Activated CD4-positive, alpha-beta T cell treated with anti-CD3 and anti-CD28 coated beads for 36 hours (primary cell): ENCODE measurements at regions of chr17 and their contacts with region 1.

Region 1: DNA sequence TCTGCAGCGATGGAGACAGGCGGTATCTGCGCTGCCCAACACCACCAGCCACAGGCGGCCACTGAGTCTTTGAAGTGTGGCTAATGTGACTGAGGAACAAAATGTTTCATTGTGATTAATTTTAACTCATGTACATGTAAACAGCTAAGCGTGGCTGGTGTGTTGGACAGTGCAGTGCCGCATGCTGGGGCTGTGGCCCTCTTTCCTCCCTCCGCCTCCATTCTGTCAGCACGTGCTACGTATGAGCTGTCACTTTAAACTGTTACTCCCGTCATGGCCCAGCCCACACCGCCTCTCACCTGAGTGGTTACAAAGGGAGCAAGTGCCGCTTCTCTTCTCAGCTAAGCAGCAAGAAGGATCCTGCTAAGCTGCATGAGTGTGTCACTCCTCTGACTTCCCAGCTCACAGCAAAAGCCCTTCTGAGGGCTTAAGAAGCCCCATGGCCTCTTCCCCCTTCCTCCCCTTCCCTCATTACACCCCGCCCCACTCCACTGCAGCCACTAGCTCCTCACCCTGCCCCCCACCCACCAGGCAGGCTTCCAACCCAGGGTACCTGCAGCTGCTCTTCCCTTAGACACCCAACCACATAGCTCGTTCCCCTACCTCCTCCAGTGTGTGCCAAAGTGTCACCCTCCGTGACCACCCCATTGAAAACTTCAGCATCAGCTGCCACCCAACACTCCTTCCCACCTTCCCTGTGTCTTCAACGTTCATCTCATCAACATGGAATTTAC is 15.0 kb downstream of the HASPIN start:
- DNase-seq: peak; percentile 88
- ATAC-seq: peak; percentile 89
- H3K4me3 Mint-ChIP-seq: no peak overlapping the region
- H3K27ac Mint-ChIP-seq: peak overlapping the region; percentile 14
- H3K4me1 Mint-ChIP-seq: peaks cover 34% of the 10 kb centered on the region
- H3K27me3 Mint-ChIP-seq: no peaks in the 10 kb centered on the region

Region 2: GRCh38 chr17:3710951-3711383 is 27.8 kb before region 1 on chr17:
- CTCF ChIA-PET with region 1: interaction called, 16 read pairs
- POLR2A ChIA-PET with region 1: interaction called, 4 read pairs
- intact Hi-C with region 1: no loop called
- DNase-seq: peak; percentile 82
- ATAC-seq: peak; percentile 98
- H3K4me3 Mint-ChIP-seq: peak overlapping the region; percentile 55
- H3K27ac Mint-ChIP-seq: peak overlapping the region; percentile 83
- H3K4me1 Mint-ChIP-seq: peaks cover 55% of the 10 kb centered on the region
- H3K27me3 Mint-ChIP-seq: no peaks in the 10 kb centered on the region

Region 3: GRCh38 chr17:3761036-3761917 is 22.5 kb after region 1 on chr17:
- CTCF ChIA-PET with region 1: interaction called, 17 read pairs
- POLR2A ChIA-PET with region 1: interaction called, 9 read pairs
- intact Hi-C with region 1: loop called (anchors 1 to 2 kb)
- DNase-seq: no peak
- ATAC-seq: no peak
- H3K4me3 Mint-ChIP-seq: no peak overlapping the region
- H3K27ac Mint-ChIP-seq: no peak overlapping the region
- H3K4me1 Mint-ChIP-seq: peaks cover 33% of the 10 kb centered on the region
- H3K27me3 Mint-ChIP-seq: no peaks in the 10 kb centered on the region

Region 4: DNA sequence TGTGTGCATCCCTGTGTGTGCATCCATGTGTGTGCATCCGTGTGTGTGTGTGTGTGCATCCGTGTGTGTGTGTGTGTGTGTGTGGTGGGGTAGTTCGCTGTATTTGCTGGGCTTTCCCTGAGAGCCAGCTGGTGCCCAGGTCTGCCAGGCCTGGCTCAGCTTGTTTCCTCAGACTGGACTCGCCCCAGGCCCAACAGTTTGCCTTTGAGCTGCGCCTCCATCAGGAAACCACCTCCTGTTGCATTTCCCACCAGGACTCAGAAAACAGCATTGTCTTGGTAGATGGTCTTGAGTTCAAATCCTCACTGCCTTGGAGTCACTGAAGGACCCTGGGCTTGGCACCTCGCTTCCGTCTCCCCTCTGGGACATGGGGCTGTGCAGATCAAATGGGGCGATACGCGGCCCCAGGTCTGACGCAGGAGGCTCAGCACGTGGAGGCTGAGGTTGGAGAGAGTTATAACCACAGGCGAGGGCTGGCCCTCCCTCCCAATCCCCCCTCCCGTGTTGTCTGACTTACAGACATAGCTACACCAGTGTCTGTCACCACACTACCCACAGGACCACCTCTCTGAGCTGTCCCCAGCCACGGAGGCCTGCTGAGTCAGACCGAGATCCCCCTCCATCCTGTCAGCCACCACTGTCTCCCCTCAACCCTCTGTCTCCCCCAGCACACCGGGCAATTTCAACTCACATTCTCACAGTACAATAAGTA is 57.5 kb after region 1 on chr17:
- CTCF ChIA-PET with region 1: interaction called, 9 read pairs
- POLR2A ChIA-PET with region 1: no interaction called
- intact Hi-C with region 1: loop called (anchors 2 to 5 kb)
- DNase-seq: peak; percentile 80
- ATAC-seq: peak; percentile 75
- H3K4me3 Mint-ChIP-seq: no peak overlapping the region
- H3K27ac Mint-ChIP-seq: peak overlapping the region; percentile 43
- H3K4me1 Mint-ChIP-seq: peaks cover 29% of the 10 kb centered on the region
- H3K27me3 Mint-ChIP-seq: no peaks in the 10 kb centered on the region

Region 5: DNA sequence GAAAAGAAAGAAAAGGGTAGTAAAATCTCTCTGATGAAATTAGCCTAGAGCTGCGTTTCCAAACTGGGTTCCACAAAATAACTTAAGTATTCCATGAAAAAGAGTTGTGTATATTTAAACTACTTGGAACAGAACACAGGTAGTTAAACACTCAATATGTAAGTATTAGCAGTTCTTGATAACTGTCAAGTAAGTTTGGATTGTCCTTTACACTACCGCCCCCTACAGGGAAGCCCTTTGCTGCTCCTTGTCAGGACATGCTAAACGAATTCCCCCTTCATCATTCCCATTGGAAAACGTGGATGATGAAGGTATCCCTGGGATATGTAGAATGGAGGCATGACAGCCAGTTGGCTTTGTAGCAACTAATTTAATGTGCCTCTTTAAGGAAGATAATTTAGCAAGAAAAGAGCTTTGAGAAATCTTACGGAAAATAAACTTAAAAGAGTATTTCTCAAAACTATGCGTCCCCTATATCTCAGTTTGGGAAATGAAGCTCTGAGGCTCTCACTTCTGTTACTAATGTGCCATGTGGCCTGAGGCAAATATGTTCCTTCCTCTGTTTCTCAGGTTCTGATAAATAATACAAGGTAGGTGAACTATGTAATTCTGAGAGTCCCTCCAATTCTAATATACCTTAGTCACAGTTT is 88.5 kb after region 1 on chr17:
- CTCF ChIA-PET with region 1: interaction called, 235 read pairs
- POLR2A ChIA-PET with region 1: interaction called, 4 read pairs
- intact Hi-C with region 1: loop called (anchors 1 kb)
- DNase-seq: peak; percentile 83
- ATAC-seq: peak; percentile 73
- H3K4me3 Mint-ChIP-seq: no peak overlapping the region
- H3K27ac Mint-ChIP-seq: no peak overlapping the region
- H3K4me1 Mint-ChIP-seq: peaks cover 2% of the 10 kb centered on the region
- H3K27me3 Mint-ChIP-seq: no peaks in the 10 kb centered on the region

Region 6: GRCh38 chr17:4004517-4005295 is 266.0 kb after region 1 on chr17:
- CTCF ChIA-PET with region 1: interaction called, 3 read pairs
- POLR2A ChIA-PET with region 1: no interaction called
- intact Hi-C with region 1: loop called in 1 of 2 experiments (anchors 1 kb)
- DNase-seq: peak; percentile 80
- ATAC-seq: peak; percentile 91
- H3K4me3 Mint-ChIP-seq: no peak overlapping the region
- H3K27ac Mint-ChIP-seq: no peak overlapping the region
- H3K4me1 Mint-ChIP-seq: peaks cover 6% of the 10 kb centered on the region
- H3K27me3 Mint-ChIP-seq: no peaks in the 10 kb centered on the region